Dendritic cell treated with granulocyte-macrophage colony-stimulating factor and Interleukin-4, amounts not matched to agents 40 ng/mL and 50 ng/mL, for 4 days (primary cell): ENCODE measurements at regions of chr10 and their contacts with region 1.

Region 1: DNA sequence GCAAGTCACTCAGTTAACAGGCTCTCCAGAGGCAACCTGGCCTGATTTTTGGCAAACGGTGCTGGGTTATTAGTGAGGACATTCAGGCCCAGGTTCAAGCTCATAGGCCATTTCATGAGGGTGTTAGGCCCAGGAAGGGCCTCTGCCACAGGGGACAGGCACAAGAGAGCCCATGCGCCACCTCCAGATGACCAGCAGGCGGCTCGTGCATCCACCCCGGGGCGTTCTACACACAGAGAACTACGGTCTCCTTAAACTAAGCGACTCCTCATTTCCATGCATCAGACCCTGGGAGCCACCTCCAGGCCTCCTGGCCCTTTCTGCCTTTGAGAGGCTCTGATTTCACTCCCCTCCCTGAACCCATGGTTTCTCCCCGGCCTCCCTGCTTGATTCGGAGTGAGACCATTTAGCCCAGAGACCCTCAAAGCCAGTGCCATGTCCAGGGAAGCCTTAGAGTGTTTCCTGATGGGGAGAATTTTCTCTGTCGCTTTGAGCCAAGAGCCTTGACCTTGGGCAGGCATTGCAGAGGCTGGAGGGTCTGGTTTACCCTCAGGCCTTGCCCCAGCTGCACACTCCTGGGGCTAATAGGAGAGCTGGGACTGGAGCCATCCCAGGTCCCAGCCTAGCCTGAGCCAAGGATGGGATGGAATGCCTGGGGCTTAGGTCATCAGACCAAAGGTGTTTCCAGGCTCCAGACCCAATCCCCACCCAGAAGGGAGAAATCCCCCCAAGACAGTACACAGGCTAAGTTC is 188.0 kb downstream of the GRID1 start:
- H3K4me3 Mint-ChIP-seq: no peak overlapping the region
- H3K27ac Mint-ChIP-seq: no peak overlapping the region
- H3K4me1 Mint-ChIP-seq: no peaks in the 10 kb centered on the region
- H3K27me3 Mint-ChIP-seq: no peaks in the 10 kb centered on the region

Region 2: GRCh38 chr10:86254526-86255174 is 76.1 kb after region 1 on chr10:
- intact Hi-C with region 1: no loop called
- H3K4me3 Mint-ChIP-seq: no peak overlapping the region
- H3K27ac Mint-ChIP-seq: no peak overlapping the region
- H3K4me1 Mint-ChIP-seq: no peaks in the 10 kb centered on the region
- H3K27me3 Mint-ChIP-seq: no peaks in the 10 kb centered on the region

Region 3: DNA sequence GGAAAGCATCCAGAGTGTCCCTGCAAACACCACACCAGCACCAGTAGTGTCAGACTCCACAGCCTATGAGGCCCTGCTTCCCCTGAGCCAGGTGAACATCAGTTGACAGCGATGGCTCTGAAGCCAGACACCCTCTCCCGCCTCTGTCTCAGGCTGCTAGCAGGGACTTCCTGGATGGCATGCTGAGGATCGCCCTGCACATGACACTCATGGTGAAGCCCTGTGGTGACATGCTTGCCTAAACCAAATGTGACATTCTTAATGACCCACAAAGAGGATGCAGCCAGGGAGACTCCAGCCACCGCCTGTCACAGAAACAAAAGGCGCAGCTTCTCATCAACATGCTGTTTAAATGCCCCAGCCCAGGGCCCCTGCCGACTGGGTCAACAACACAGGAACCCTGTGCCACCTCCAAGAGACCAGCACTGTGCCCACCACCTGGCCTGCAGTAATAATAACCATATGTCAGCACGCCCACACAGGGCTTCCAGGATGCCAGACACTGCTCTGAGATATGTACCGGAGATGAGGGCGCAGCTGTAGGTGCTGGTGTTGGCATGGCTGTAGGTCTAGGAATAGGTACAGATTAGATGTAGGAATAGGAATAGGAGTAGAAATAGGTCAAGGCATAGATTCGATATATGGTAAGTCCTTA is 106.7 kb after region 1 on chr10:
- intact Hi-C with region 1: no loop called
- H3K4me3 Mint-ChIP-seq: no peak overlapping the region
- H3K27ac Mint-ChIP-seq: no peak overlapping the region
- H3K4me1 Mint-ChIP-seq: no peaks in the 10 kb centered on the region
- H3K27me3 Mint-ChIP-seq: peaks cover 2% of the 10 kb centered on the region

Region 4: DNA sequence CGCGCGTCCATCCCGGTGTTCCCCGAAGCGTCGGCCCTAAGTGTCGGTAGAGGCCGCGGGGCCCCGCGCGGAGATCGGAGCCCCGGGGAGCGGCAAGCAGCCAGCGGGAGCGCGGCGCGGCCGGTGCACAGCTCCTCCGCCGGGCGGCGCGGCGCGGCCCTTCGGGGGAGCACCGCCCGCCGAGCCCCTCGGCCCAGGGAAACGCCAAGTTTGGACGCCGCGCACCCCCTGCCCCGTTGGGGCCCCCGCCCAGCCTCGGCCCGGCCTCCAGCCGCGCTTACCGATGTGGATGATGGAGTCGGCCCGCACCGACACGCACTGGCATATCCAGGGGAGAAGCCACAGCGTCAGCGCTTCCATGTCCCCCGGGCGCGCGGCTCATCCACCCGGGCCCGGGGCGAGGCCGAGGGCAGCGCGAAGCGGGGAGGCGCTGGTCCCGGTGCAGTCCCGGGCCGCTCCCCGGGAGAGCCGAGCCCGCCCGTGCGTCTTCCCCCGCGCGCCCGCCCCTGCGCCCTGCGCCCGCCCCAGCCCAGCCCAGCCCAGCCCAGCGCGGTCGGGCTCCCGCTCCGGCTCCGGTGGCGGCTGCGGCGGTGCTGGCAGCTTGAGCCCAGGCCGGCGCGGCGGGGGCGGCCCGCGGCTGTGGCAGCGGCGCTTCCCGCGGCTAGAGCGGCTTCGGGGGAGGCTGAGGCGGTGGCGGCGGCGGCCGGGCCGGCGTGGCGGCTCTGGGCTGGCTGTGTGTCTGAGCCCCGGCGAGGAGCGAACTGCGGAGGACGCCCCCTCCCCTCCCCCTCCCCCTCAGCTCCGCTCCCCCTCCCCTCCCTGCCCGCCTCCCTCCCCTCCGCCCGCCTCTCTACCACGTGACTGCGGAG is 187.7 kb after region 1 on chr10 and contains the start of gene GRID1:
- intact Hi-C with region 1: loop called (anchors 10 kb)
- H3K4me3 Mint-ChIP-seq: peak within 1 kb of the TSS; percentile 49
- H3K27ac Mint-ChIP-seq: no peak within 1 kb of the TSS
- H3K4me1 Mint-ChIP-seq: peaks cover 45% of the 10 kb centered on the region
- H3K27me3 Mint-ChIP-seq: peaks cover 91% of the 10 kb centered on the region